Heart right ventricle (tissue), 16 donors: ENCODE measurements at regions of chr5 and their contacts with region 1.

Region 1: GRCh38 chr5:91684625-91685024 is 301.5 kb upstream of the ARRDC3 start:
- DNase-seq: no peak
- ATAC-seq: no peak
- H3K4me3 ChIP-seq: no peak overlapping the region
- H3K27ac ChIP-seq: no peak overlapping the region
- H3K4me1 ChIP-seq: no peaks in the 10 kb centered on the region
- H3K27me3 ChIP-seq: no peaks in the 10 kb centered on the region
- CTCF ChIP-seq: no peak

Region 2: DNA sequence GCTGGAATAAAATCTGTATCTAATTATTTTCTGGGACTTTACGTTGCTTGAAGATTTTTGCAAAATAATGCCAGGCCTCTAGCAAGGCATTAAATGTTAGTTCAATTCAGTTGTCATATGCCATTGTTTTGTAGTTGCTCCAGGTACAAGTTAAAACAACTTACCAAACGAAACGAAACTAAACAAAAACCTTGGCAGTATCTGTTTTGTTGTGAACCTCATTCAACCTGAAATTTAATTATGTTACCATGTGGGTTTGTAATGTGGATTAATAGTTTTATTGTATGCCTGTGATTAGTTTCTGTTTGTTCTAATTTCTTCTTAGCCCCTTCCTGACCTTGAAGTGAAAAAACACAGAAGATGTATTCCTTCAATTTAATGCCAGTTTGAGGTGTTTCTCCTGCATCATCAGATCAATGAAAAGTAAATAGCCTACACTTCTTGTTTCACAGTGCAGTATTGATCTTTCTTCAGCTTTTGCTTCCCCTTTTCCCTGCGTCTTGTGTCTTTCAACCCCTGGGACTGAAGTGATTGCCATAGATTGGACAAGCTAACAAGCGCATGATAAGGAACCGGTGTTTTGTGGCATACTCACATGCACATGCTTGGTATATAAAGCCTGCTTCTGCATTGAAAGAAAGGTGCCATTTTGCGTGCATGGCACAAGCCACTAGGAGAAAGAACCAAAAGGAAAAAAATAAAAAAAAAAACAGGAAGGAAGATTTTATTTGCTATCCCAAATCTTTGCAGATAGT is 397.5 kb after region 1 on chr5:
- intact Hi-C with region 1: loop called in 1 of 10 experiments (anchors 5 kb)
- DNase-seq: no peak
- ATAC-seq: no peak
- H3K4me3 ChIP-seq: no peak overlapping the region
- H3K27ac ChIP-seq: no peak overlapping the region
- H3K4me1 ChIP-seq: no peaks in the 10 kb centered on the region
- H3K27me3 ChIP-seq: no peaks in the 10 kb centered on the region
- CTCF ChIP-seq: no peak